GM12878 (cell line): ENCODE measurements at regions of chr6 and their contacts with region 1.

Region 1: DNA sequence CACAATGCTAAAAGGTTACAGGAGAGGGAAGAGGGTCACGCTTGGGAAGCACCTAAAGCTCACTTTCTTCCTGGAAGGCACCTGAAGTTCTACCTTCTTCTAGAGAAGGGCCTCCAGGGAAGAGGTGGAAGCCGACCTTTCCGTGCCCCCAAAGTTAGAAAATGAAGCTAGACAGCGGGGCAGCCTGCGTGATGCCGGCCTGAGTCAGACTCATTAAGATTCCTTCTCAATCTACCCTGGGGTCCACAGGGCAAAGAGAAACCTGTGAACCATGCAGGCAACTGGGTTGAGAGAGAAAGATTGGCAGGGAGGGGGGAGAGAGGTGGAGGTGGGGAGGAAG is 54.8 kb upstream of the CCDC167 start:
- DNase-seq: no peak
- ATAC-seq: peak; percentile 8
- H3K4me3 ChIP-seq: peak overlapping the region; percentile 81
- H3K27ac ChIP-seq: peak overlapping the region; percentile 91
- H3K4me1 ChIP-seq: peaks cover 86% of the 10 kb centered on the region
- H3K27me3 ChIP-seq: no peaks in the 10 kb centered on the region
- CTCF ChIP-seq: no peak
- EP300 ChIP-seq: no peak
- POLR2A ChIP-seq: no peak
- RAD21 ChIP-seq: no peak

Region 2: GRCh38 chr6:37432916-37433656 is 121.4 kb before region 1 on chr6 and contains the start of gene CMTR1:
- CTCF ChIA-PET with region 1: interaction called, 4 read pairs
- POLR2A ChIA-PET with region 1: interaction called, 6 read pairs
- RAD21 ChIA-PET with region 1: interaction called, 3 read pairs
- SMC1A ChIA-PET with region 1: interaction called, 4 read pairs
- in situ Hi-C with region 1: no loop called
- intact Hi-C with region 1: loop called (anchors 5 kb)
- DNase-seq: peak; percentile 83
- ATAC-seq: peak; percentile 91
- H3K4me3 ChIP-seq: peak within 1 kb of the TSS; percentile 97
- H3K27ac ChIP-seq: peak within 1 kb of the TSS; percentile 94
- H3K4me1 ChIP-seq: peaks cover 5% of the 10 kb centered on the region
- H3K27me3 ChIP-seq: no peaks in the 10 kb centered on the region
- CTCF ChIP-seq: no peak
- EP300 ChIP-seq: peak in 1 of 2 experiments; percentile 42; a peak in 2 of 4 replicates
- POLR2A ChIP-seq: peak; percentile 90
- RAD21 ChIP-seq: no peak
- polyA plus RNA-seq, gene CMTR1: 2.7 to 3.5 TPM

Region 3: DNA sequence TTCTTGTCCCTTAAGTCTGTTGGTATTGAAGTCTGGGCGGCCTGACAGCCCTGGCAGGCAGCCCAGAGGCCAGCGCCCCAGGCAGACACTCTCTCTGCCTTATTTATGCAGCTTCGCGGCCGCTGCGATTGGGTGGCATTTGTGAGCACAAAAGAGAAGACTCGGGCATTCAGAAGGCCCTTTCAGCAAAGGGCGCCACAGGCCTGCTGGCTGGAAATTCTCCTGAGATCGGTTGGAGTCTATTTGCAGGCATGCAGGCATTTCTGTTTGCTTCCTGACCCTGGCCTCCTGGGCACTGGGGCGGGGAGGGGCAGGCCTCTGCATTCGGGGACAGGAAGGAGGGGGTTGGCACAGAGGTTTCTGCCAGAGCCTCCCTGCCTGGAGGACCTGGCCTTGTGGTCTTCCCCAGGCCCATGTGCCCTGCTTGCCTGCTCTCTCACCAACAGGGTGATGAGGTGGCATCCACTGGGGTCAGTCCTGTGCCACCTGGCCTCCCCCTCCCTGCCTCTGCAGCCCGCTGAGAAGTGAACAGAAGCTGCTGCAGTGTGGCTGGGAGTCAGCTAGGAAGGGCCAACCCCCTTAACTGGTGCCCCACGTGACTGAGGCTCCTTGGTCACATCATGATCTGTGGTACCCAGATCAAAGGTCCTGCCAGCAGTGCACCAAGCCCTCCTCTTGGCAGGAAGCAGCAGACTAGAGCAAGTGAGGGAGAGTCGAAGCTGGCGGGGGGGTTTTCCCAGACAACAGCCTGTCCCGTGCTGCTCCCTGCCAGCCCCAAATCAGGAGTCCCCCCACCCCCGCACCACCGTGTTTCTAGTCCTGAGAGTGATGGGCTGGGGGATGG is 38.2 kb before region 1 on chr6:
- CTCF ChIA-PET with region 1: interaction called, 3 read pairs
- POLR2A ChIA-PET with region 1: interaction called, 18 read pairs
- RAD21 ChIA-PET with region 1: interaction called, 15 read pairs
- SMC1A ChIA-PET with region 1: interaction called, 5 read pairs
- in situ Hi-C with region 1: no loop called
- intact Hi-C with region 1: no loop called
- DNase-seq: peak; percentile 78
- ATAC-seq: peak; percentile 94
- H3K4me3 ChIP-seq: 0 out of 2 replicates have a peak overlapping the region, but pooled peaks have one; percentile 10
- H3K27ac ChIP-seq: peak overlapping the region; percentile 65
- H3K4me1 ChIP-seq: peaks cover 33% of the 10 kb centered on the region
- H3K27me3 ChIP-seq: no peaks in the 10 kb centered on the region
- CTCF ChIP-seq: peak in 2 of 3 experiments; percentile 3 to 11; a peak in 1 of 6 replicates
- EP300 ChIP-seq: peak in 1 of 2 experiments; percentile 26; a peak in 1 of 4 replicates
- POLR2A ChIP-seq: peak; percentile 69
- RAD21 ChIP-seq: no peak

Region 4: DNA sequence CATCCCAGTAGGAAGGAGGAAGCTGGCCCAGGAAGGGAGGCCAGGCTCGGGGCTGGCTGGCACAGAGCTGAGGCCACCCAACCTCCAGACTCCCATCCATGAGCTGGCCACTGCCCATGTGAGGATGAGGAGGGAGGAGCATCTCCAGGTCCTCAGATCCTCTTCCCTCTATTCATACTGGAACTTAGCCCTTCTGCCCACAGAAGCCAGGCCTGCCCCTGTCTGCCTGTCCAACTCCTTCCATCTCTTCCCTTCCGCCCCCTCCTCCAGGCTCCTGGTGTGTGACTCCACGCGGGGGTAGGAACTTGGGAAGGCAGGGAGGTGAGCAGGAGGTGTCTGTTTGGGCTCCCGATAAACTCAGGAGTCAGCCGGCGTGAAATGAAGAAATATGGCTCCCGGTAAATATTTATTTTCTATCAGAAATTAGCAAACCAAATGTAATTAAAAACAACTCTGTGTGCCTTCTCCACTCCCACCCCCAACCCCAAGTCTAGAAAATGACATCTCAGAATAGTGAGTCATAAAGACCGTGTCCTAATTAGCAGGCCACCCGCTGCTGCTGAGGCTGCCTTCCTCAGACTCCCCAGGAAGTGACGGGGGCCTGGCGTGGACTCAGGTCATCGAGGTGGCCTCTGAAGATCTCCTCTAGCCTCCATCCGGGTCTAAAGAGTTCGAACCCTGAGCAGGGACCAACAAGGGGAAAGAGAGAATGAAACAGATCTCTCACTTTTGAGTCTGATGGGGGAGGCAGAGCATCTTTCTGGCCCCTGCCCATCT is 61.3 kb after region 1 on chr6:
- CTCF ChIA-PET with region 1: no interaction called
- POLR2A ChIA-PET with region 1: no interaction called
- RAD21 ChIA-PET with region 1: no interaction called
- SMC1A ChIA-PET with region 1: no interaction called
- in situ Hi-C with region 1: no loop called
- intact Hi-C with region 1: no loop called
- DNase-seq: no peak
- ATAC-seq: peak; percentile 70
- H3K4me3 ChIP-seq: no peak overlapping the region
- H3K27ac ChIP-seq: no peak overlapping the region
- H3K4me1 ChIP-seq: no peaks in the 10 kb centered on the region; the same call in 1 of the 2 replicates
- H3K27me3 ChIP-seq: no peaks in the 10 kb centered on the region
- CTCF ChIP-seq: no peak
- EP300 ChIP-seq: no peak
- POLR2A ChIP-seq: no peak
- RAD21 ChIP-seq: no peak